ENCODE measurements at regions of chr14 and their contacts with region 1.

Region 1: GRCh38 chr14:22929104-22929847 is at the start of gene PRMT5:
- DNase-seq: peak; percentile 99
- H3K4me3 Mint-ChIP-seq: no peak within 1 kb of the TSS
- H3K27ac Mint-ChIP-seq: no peak within 1 kb of the TSS
- H3K4me1 Mint-ChIP-seq: peaks cover 27% of the 10 kb centered on the region
- H3K27me3 Mint-ChIP-seq: no peaks in the 10 kb centered on the region
- total RNA-seq, gene PRMT5: 52.6 to 56.8 TPM

Region 2: GRCh38 chr14:22344673-22345072 is 584.6 kb before region 1 on chr14:
- CTCF ChIA-PET with region 1: no interaction called
- POLR2A ChIA-PET with region 1: no interaction called
- DNase-seq: no peak
- H3K4me3 Mint-ChIP-seq: no peak overlapping the region
- H3K27ac Mint-ChIP-seq: no peak overlapping the region
- H3K4me1 Mint-ChIP-seq: no peaks in the 10 kb centered on the region
- H3K27me3 Mint-ChIP-seq: no peaks in the 10 kb centered on the region

Region 3: GRCh38 chr14:22653012-22653621 is 276.2 kb before region 1 on chr14:
- CTCF ChIA-PET with region 1: no interaction called
- POLR2A ChIA-PET with region 1: no interaction called
- DNase-seq: peak; percentile 64
- H3K4me3 Mint-ChIP-seq: no peak overlapping the region
- H3K27ac Mint-ChIP-seq: no peak overlapping the region
- H3K4me1 Mint-ChIP-seq: peaks cover 9% of the 10 kb centered on the region
- H3K27me3 Mint-ChIP-seq: no peaks in the 10 kb centered on the region

Region 4: DNA sequence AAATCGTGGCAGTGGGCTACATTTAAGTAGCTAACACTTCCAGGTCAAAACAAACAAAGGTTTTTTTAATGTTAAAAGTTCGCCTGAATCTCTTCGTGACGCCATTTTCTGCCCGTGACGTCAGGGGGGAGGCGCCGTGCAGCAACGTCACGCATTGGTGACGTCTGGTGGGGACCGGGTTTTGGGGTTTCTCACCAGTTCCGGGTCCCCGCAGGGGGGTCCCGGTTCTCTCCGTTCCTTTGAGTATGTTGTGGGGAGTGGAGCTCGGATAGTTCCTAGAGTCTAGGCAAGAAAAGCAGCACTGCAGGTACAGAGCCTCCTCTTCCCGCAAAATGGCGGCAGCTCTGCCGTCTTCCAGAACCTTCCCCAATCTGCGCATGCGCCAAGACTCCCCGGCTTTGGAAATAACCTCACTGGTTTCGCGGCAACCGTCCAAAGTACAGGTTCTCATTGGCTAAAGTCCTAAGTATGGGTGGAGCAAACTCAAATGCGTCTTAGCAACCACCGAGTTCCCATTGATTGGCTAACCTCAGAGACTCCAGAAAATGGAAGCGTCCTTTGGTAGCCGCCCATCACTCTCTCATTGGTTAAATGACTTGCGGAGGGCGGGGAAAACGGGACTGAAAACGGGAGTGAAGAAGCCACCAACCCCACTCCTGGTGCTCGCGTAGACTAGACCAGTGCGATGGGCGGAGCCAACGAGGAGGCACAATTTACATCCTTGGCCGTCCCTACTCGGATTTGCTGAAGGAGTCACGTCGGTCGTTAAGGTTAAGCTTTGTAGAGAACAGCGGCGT is 10.3 kb before region 1 on chr14 and contains the start of gene RBM23:
- CTCF ChIA-PET with region 1: interaction called, 45 read pairs
- POLR2A ChIA-PET with region 1: no interaction called
- DNase-seq: peak; percentile 100
- H3K4me3 Mint-ChIP-seq: peak within 1 kb of the TSS; percentile 91
- H3K27ac Mint-ChIP-seq: peak within 1 kb of the TSS; percentile 100
- H3K4me1 Mint-ChIP-seq: peaks cover 45% of the 10 kb centered on the region
- H3K27me3 Mint-ChIP-seq: no peaks in the 10 kb centered on the region
- total RNA-seq, gene RBM23: 79.0 to 79.6 TPM

Region 5: DNA sequence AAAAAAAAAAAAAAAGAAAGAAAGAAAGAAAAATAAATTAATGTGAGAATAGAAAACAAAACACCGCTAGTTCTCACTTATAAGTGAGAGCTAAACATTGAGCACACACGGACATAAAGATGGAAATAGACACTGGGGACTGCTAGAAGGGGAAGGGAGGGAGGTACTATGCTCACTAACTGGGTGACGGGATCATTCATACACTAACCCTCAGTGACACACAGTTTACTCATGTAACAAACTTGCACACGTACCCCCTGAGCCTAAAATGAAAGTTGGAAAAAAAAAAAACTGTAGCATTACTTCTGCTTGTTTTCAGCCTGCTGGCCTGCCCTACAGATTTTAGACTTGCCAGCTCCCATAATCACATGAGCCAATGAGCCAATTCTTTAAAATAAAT is 10.4 kb after region 1 on chr14:
- CTCF ChIA-PET with region 1: interaction called, 14 read pairs
- POLR2A ChIA-PET with region 1: no interaction called
- DNase-seq: no peak
- H3K4me3 Mint-ChIP-seq: no peak overlapping the region
- H3K27ac Mint-ChIP-seq: no peak overlapping the region
- H3K4me1 Mint-ChIP-seq: no peaks in the 10 kb centered on the region
- H3K27me3 Mint-ChIP-seq: no peaks in the 10 kb centered on the region

Region 6: GRCh38 chr14:22955702-22956569 is 26.7 kb after region 1 on chr14:
- CTCF ChIA-PET with region 1: interaction called, 21 read pairs
- POLR2A ChIA-PET with region 1: interaction called, 3 read pairs
- DNase-seq: no peak
- H3K4me3 Mint-ChIP-seq: peak overlapping the region; percentile 95
- H3K27ac Mint-ChIP-seq: peak overlapping the region; percentile 94
- H3K4me1 Mint-ChIP-seq: peaks cover 35% of the 10 kb centered on the region
- H3K27me3 Mint-ChIP-seq: peaks cover 4% of the 10 kb centered on the region

Region 7: DNA sequence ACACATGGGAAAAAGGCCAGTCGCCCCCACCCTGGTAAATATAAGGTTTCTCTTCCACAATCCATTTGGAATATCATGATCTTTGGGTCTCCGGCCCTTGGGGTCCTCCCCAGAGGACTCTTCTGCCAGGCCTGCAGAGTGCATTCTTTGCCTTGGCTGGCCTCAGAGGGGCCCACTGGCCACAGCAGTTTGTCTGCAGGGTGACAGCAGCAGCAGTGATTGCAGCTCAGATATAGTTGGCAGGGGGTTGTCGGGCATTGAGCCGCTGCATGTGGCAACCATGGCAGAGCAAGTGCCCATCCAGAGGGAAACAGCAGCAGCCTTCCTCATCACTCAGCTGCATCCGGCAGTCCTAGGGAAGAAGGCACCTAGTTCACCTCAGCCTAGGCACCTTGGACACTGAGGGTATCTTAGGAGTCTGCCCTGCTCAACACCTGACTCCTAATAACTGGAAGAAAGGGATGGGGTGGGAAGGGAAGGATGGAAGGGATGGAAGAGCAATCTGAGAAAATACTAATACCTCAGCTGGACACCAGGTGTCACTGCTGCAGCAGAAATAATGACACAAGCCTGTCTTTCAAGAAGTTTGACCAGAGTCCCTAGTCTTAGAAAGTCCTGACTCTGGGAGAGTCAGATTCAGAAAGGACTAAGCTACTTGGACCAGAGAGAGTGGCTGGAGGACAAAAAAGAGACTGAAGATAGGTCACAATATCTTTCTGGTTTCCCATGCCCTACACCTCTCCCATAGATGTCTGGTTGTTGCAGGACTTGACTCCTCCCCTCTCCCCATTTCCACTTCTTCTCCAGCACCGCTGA is 44.1 kb after region 1 on chr14:
- CTCF ChIA-PET with region 1: interaction called, 11 read pairs
- POLR2A ChIA-PET with region 1: no interaction called
- DNase-seq: peak; percentile 57
- H3K4me3 Mint-ChIP-seq: no peak overlapping the region
- H3K27ac Mint-ChIP-seq: no peak overlapping the region
- H3K4me1 Mint-ChIP-seq: no peaks in the 10 kb centered on the region
- H3K27me3 Mint-ChIP-seq: peaks cover 14% of the 10 kb centered on the region

Region 8: GRCh38 chr14:22986508-22987054 is 57.3 kb after region 1 on chr14:
- CTCF ChIA-PET with region 1: interaction called, 16 read pairs
- POLR2A ChIA-PET with region 1: interaction called, 3 read pairs
- DNase-seq: peak; percentile 94
- H3K4me3 Mint-ChIP-seq: no peak overlapping the region
- H3K27ac Mint-ChIP-seq: no peak overlapping the region
- H3K4me1 Mint-ChIP-seq: no peaks in the 10 kb centered on the region
- H3K27me3 Mint-ChIP-seq: no peaks in the 10 kb centered on the region

Region 9: DNA sequence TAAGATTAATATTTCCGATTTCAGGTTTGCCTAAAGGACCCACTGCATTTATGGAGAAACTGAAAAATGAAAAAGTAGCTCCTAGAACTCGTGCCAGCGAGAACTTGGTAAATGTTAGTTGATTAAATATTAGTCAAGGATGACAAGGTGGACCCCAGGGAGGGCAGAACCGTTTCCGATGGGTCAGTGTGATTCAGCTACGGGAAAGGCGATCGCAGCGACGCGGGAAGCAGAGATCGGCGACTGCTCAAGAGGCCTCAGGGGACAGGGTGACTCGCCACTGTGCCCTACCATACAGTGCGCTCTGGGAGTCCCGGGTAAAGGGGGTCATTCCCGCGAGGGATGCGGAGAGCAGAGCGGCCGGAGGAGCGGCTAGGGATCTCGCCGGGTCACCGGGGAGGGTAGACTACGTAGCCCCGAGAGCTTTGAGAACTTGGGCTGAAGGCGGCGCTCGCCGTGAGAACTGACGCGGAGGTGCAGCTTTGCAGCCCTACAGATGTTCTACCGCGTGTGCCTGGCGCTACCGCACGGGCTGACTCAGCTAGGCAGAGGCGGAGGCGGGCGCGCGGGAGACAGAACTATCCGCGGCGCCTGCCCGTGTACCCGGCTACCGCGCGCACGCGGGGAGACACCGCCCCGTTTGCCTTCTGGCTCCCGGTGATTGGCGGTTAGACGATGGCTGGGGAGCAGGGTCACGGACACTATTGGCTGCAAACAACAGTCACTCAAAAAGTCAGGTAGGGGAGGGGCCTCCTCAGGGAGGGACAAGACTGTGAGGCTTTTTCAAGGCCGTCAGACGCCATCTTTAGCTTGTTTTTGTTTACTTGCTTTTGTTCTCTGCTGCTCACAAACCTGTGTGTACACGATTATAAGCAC is 77.5 kb after region 1 on chr14:
- CTCF ChIA-PET with region 1: interaction called, 12 read pairs
- POLR2A ChIA-PET with region 1: interaction called, 3 read pairs
- DNase-seq: peak; percentile 98
- H3K4me3 Mint-ChIP-seq: peak overlapping the region; percentile 91
- H3K27ac Mint-ChIP-seq: peak overlapping the region; percentile 92
- H3K4me1 Mint-ChIP-seq: peaks cover 50% of the 10 kb centered on the region
- H3K27me3 Mint-ChIP-seq: no peaks in the 10 kb centered on the region

Measured in activated CD4-positive, alpha-beta T cell treated with anti-CD3 and anti-CD28 coated beads, Interleukin-2, amount 10 ng/mL, durations not matched to agents 7 days and 5 days (primary cell).